A549 (cell line): ENCODE measurements at regions of chr14 and their contacts with region 1.

Region 1: DNA sequence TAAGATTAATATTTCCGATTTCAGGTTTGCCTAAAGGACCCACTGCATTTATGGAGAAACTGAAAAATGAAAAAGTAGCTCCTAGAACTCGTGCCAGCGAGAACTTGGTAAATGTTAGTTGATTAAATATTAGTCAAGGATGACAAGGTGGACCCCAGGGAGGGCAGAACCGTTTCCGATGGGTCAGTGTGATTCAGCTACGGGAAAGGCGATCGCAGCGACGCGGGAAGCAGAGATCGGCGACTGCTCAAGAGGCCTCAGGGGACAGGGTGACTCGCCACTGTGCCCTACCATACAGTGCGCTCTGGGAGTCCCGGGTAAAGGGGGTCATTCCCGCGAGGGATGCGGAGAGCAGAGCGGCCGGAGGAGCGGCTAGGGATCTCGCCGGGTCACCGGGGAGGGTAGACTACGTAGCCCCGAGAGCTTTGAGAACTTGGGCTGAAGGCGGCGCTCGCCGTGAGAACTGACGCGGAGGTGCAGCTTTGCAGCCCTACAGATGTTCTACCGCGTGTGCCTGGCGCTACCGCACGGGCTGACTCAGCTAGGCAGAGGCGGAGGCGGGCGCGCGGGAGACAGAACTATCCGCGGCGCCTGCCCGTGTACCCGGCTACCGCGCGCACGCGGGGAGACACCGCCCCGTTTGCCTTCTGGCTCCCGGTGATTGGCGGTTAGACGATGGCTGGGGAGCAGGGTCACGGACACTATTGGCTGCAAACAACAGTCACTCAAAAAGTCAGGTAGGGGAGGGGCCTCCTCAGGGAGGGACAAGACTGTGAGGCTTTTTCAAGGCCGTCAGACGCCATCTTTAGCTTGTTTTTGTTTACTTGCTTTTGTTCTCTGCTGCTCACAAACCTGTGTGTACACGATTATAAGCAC is 3.2 kb downstream of the C14orf93 start:
- DNase-seq: peak; percentile 97 to 99
- ATAC-seq: peak; percentile 96 to 98
- H3K4me3 ChIP-seq: peak overlapping the region; percentile 60
- H3K27ac ChIP-seq: peak overlapping the region; percentile 93
- H3K4me1 ChIP-seq: peaks cover 27% of the 10 kb centered on the region
- CTCF ChIP-seq: peak; percentile 35; the same call in 2 of the 3 replicates
- EP300 ChIP-seq: no peak
- POLR2A ChIP-seq: peak; percentile 81
- RAD21 ChIP-seq: 0 out of 5 replicates have a peak, but pooled peaks of 1 of the 2 experiments have one; percentile 11

Region 2: GRCh38 chr14:22973217-22974032 is 33.4 kb before region 1 on chr14:
- CTCF ChIA-PET with region 1: interaction called, 25 read pairs
- POLR2A ChIA-PET with region 1: interaction called, 10 read pairs
- DNase-seq: peak; percentile 63 to 79
- ATAC-seq: peak; percentile 24 to 45
- H3K4me3 ChIP-seq: no peak overlapping the region
- H3K27ac ChIP-seq: peak overlapping the region; percentile 98 to 100
- H3K4me1 ChIP-seq: peaks cover 63% of the 10 kb centered on the region
- CTCF ChIP-seq: peak; percentile 83
- EP300 ChIP-seq: no peak
- POLR2A ChIP-seq: no peak
- RAD21 ChIP-seq: peak; percentile 86 to 87

Region 3: GRCh38 chr14:22994762-22995275 is 12.0 kb before region 1 on chr14:
- CTCF ChIA-PET with region 1: interaction called, 73 read pairs
- POLR2A ChIA-PET with region 1: interaction called, 27 read pairs
- DNase-seq: peak; percentile 40 to 41
- ATAC-seq: peak; percentile 91 to 94
- H3K4me3 ChIP-seq: no peak overlapping the region
- H3K27ac ChIP-seq: peak overlapping the region in 1 of 2 experiments; percentile 56; a peak in 2 of 6 replicates
- H3K4me1 ChIP-seq: peaks cover 5% of the 10 kb centered on the region; the same call in 2 of the 3 replicates
- CTCF ChIP-seq: peak; percentile 60
- EP300 ChIP-seq: no peak
- POLR2A ChIP-seq: no peak
- RAD21 ChIP-seq: peak; percentile 60 to 75; a peak in 4 of 5 replicates

Region 4: GRCh38 chr14:23025151-23025814 is 18.5 kb after region 1 on chr14:
- CTCF ChIA-PET with region 1: interaction called, 11 read pairs
- POLR2A ChIA-PET with region 1: interaction called, 25 read pairs
- DNase-seq: no peak
- ATAC-seq: peak in 1 of 2 experiments; percentile 19; a peak in 1 of 6 replicates
- H3K4me3 ChIP-seq: no peak overlapping the region
- H3K27ac ChIP-seq: no peak overlapping the region
- H3K4me1 ChIP-seq: no peaks in the 10 kb centered on the region
- CTCF ChIP-seq: no peak
- EP300 ChIP-seq: no peak
- POLR2A ChIP-seq: no peak
- RAD21 ChIP-seq: no peak

Region 5: GRCh38 chr14:23034483-23035302 is 27.9 kb after region 1 on chr14 and contains the start of gene PSMB5:
- CTCF ChIA-PET with region 1: interaction called, 1,206 read pairs
- POLR2A ChIA-PET with region 1: interaction called, 21 read pairs
- DNase-seq: peak; percentile 98
- ATAC-seq: peak; percentile 97 to 99
- H3K4me3 ChIP-seq: peak within 1 kb of the TSS; percentile 76
- H3K27ac ChIP-seq: peak within 1 kb of the TSS; percentile 89 to 97
- H3K4me1 ChIP-seq: peaks cover 13% of the 10 kb centered on the region
- CTCF ChIP-seq: no peak
- EP300 ChIP-seq: no peak
- POLR2A ChIP-seq: peak; percentile 80
- RAD21 ChIP-seq: no peak
- polyA plus RNA-seq, gene PSMB5: 283 and 337 TPM in 2 replicates